ENCODE measurements at regions of chr19 and their contacts with region 1.

Region 1: GRCh38 chr19:2328401-2329148 is at the starts of genes LSM7 and SPPL2B:
- DNase-seq: peak; percentile 97
- ATAC-seq: peak; percentile 52
- H3K4me3 Mint-ChIP-seq: peak within 1 kb of the TSS; percentile 100
- H3K27ac Mint-ChIP-seq: peak within 1 kb of the TSS; percentile 99
- H3K4me1 Mint-ChIP-seq: peaks cover 86% of the 10 kb centered on the region
- H3K27me3 Mint-ChIP-seq: no peaks in the 10 kb centered on the region
- CTCF ChIP-seq: no peak
- total RNA-seq, gene LSM7: 149 and 152 TPM in 2 replicates
- total RNA-seq, gene SPPL2B: 112 and 142 TPM in 2 replicates

Region 2: GRCh38 chr19:2041683-2042484 is 286.7 kb before region 1 on chr19:
- CTCF ChIA-PET with region 1: no interaction called
- POLR2A ChIA-PET with region 1: no interaction called
- intact Hi-C with region 1: no loop called
- DNase-seq: peak; percentile 96
- ATAC-seq: peak; percentile 69
- H3K4me3 Mint-ChIP-seq: peak overlapping the region; percentile 61
- H3K27ac Mint-ChIP-seq: peak overlapping the region; percentile 81
- H3K4me1 Mint-ChIP-seq: peaks cover 70% of the 10 kb centered on the region
- H3K27me3 Mint-ChIP-seq: no peaks in the 10 kb centered on the region
- CTCF ChIP-seq: no peak

Region 3: GRCh38 chr19:2176337-2176994 is 152.1 kb before region 1 on chr19:
- CTCF ChIA-PET with region 1: interaction called, 3 read pairs
- POLR2A ChIA-PET with region 1: interaction called, 13 read pairs
- intact Hi-C with region 1: no loop called
- DNase-seq: no peak
- ATAC-seq: no peak
- H3K4me3 Mint-ChIP-seq: no peak overlapping the region
- H3K27ac Mint-ChIP-seq: no peak overlapping the region
- H3K4me1 Mint-ChIP-seq: peaks cover 35% of the 10 kb centered on the region
- H3K27me3 Mint-ChIP-seq: no peaks in the 10 kb centered on the region
- CTCF ChIP-seq: no peak

Region 4: GRCh38 chr19:2269244-2269947 is 59.2 kb before region 1 on chr19:
- CTCF ChIA-PET with region 1: interaction called, 4 read pairs
- POLR2A ChIA-PET with region 1: interaction called, 12 read pairs
- intact Hi-C with region 1: loop called (anchors 2 kb)
- DNase-seq: peak; percentile 100
- ATAC-seq: peak; percentile 67
- H3K4me3 Mint-ChIP-seq: peak overlapping the region; percentile 92
- H3K27ac Mint-ChIP-seq: peak overlapping the region; percentile 91
- H3K4me1 Mint-ChIP-seq: peaks cover 60% of the 10 kb centered on the region
- H3K27me3 Mint-ChIP-seq: no peaks in the 10 kb centered on the region
- CTCF ChIP-seq: no peak

Region 5: GRCh38 chr19:2289714-2290435 is 38.7 kb before region 1 on chr19:
- CTCF ChIA-PET with region 1: interaction called, 3 read pairs
- POLR2A ChIA-PET with region 1: interaction called, 11 read pairs
- intact Hi-C with region 1: loop called (anchors 1 kb)
- DNase-seq: peak; percentile 69
- ATAC-seq: peak; percentile 69
- H3K4me3 Mint-ChIP-seq: peak overlapping the region; percentile 90
- H3K27ac Mint-ChIP-seq: peak overlapping the region; percentile 90
- H3K4me1 Mint-ChIP-seq: peaks cover 54% of the 10 kb centered on the region
- H3K27me3 Mint-ChIP-seq: no peaks in the 10 kb centered on the region
- CTCF ChIP-seq: no peak

Region 6: DNA sequence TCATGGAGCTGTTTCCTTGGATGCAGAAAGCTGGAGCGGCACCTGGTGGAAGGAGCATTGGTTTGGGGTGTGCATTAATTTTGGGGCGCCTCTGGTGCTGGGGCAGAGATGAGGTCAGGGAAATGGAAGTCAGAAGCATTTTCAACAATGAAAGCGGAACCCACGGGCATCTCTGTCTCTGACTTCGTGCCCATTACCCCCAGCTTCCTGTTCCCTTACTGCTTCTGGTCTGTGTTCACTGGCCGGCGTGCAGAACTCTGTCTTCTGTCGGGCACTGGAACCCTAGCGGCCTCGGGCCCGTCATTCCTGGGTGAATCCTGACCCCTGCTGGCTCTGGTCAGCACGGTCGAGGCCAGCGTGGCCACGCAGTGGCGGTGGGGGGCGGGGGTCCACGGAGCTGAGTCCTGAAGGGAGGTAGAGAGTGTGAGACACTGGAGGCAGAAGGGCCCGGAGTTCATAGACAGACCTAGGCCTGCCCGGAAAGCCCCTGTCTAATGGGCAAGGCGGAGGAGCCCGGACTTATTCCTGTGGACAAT is 12.7 kb before region 1 on chr19:
- CTCF ChIA-PET with region 1: interaction called, 6 read pairs
- POLR2A ChIA-PET with region 1: interaction called, 23 read pairs
- intact Hi-C with region 1: no loop called
- DNase-seq: peak; percentile 54
- ATAC-seq: peak; percentile 74
- H3K4me3 Mint-ChIP-seq: peak overlapping the region; percentile 59
- H3K27ac Mint-ChIP-seq: peak overlapping the region; percentile 82
- H3K4me1 Mint-ChIP-seq: peaks cover 55% of the 10 kb centered on the region
- H3K27me3 Mint-ChIP-seq: no peaks in the 10 kb centered on the region
- CTCF ChIP-seq: no peak

Region 7: GRCh38 chr19:2488942-2489731 is 160.6 kb after region 1 on chr19:
- CTCF ChIA-PET with region 1: no interaction called
- POLR2A ChIA-PET with region 1: no interaction called
- intact Hi-C with region 1: no loop called
- DNase-seq: peak; percentile 44
- ATAC-seq: no peak
- H3K4me3 Mint-ChIP-seq: peak overlapping the region; percentile 41
- H3K27ac Mint-ChIP-seq: no peak overlapping the region
- H3K4me1 Mint-ChIP-seq: peaks cover 74% of the 10 kb centered on the region
- H3K27me3 Mint-ChIP-seq: peaks cover 28% of the 10 kb centered on the region
- CTCF ChIP-seq: no peak

Region 8: GRCh38 chr19:2627319-2627829 is 298.8 kb after region 1 on chr19:
- CTCF ChIA-PET with region 1: no interaction called
- POLR2A ChIA-PET with region 1: interaction called, 5 read pairs
- intact Hi-C with region 1: loop called (anchors 5 kb)
- DNase-seq: peak; percentile 68
- ATAC-seq: peak; percentile 62
- H3K4me3 Mint-ChIP-seq: peak overlapping the region; percentile 76
- H3K27ac Mint-ChIP-seq: peak overlapping the region; percentile 94
- H3K4me1 Mint-ChIP-seq: peaks cover 95% of the 10 kb centered on the region
- H3K27me3 Mint-ChIP-seq: no peaks in the 10 kb centered on the region
- CTCF ChIP-seq: no peak

Region 9: GRCh38 chr19:3132971-3133792 is 804.6 kb after region 1 on chr19:
- CTCF ChIA-PET with region 1: no interaction called
- POLR2A ChIA-PET with region 1: interaction called, 12 read pairs
- intact Hi-C with region 1: no loop called
- DNase-seq: peak; percentile 41
- ATAC-seq: peak; percentile 87
- H3K4me3 Mint-ChIP-seq: peak overlapping the region; percentile 62
- H3K27ac Mint-ChIP-seq: peak overlapping the region; percentile 46
- H3K4me1 Mint-ChIP-seq: peaks cover 26% of the 10 kb centered on the region
- H3K27me3 Mint-ChIP-seq: peaks cover 5% of the 10 kb centered on the region
- CTCF ChIP-seq: no peak